ENCODE measurements at regions of chr4 and their contacts with region 1.

Region 1: GRCh38 chr4:42588909-42589308 is 68.0 kb downstream of the ATP8A1 start:
- DNase-seq: no peak
- H3K4me3 ChIP-seq: no peak overlapping the region
- H3K27ac ChIP-seq: no peak overlapping the region
- H3K4me1 ChIP-seq: no peaks in the 10 kb centered on the region
- H3K27me3 ChIP-seq: no peaks in the 10 kb centered on the region
- CTCF ChIP-seq: no peak
- EP300 ChIP-seq: no peak
- POLR2A ChIP-seq: no peak

Region 2: DNA sequence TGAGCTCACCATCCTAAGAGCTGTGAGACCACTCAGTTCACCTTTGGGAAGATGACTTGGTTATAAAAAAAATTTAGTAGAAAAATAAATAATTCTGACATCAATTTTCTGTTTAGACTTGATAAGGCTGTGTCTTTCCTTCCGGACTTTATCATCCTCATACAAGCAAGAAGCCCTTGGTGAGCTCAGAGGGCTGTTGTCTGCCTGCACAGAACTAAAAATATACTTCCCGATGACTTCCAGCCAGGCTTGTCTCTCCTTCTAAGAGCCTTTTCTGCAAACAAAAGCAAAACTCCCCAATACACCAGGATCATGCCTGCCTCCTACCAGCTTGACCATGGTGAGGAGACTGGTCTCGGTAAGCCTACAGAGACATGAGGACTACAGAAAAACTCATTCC is 782.1 kb before region 1 on chr4:
- intact Hi-C with region 1: no loop called
- DNase-seq: no peak
- H3K4me3 ChIP-seq: no peak overlapping the region
- H3K27ac ChIP-seq: no peak overlapping the region
- H3K4me1 ChIP-seq: no peaks in the 10 kb centered on the region
- H3K27me3 ChIP-seq: no peaks in the 10 kb centered on the region
- CTCF ChIP-seq: no peak
- EP300 ChIP-seq: no peak
- POLR2A ChIP-seq: no peak

Region 3: DNA sequence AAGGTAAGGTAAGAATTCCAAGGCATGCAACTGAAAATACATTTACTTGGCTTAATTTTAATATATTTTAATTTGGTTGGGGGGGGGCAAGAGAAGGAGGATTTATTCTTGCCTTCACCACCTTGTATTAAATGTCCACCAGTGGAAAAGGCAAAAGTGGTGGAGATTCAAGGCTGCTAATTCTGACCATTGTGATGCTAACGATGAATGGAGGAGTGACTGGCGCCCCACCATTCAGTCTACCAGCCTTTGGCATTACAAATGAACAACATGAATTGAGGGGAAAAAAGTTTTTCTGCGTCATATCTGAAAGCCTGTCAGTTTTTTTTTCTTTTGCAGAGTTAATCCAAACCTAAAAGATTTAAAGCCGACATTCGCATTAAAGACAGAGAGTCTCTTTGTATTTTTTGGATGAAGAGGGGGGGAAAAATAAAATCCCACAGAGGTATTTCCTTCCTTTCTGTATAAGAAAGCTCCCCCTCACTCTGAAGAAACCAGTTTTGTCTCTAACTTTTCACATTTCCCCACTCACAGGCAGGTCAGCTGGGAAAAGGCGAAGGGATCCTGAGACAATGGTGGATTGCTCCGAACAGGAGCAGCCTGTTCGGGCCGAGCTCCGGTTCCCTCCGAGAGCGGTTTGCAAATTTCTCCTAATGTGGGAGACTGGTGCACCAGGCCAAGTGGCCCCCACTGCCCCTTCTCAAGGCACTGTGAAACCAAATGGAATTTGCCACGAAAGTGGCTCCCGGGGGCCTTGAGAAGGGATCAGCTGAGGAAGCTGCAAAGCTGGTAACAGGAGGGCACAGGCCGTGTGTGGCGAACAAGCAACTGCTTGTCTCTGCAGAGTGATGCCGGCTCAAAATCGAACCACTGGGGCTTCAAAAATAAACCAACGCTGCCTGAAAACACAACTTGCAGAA is 163.5 kb before region 1 on chr4:
- intact Hi-C with region 1: no loop called
- DNase-seq: no peak
- H3K4me3 ChIP-seq: no peak overlapping the region
- H3K27ac ChIP-seq: no peak overlapping the region
- H3K4me1 ChIP-seq: no peaks in the 10 kb centered on the region
- H3K27me3 ChIP-seq: peaks cover 7% of the 10 kb centered on the region
- CTCF ChIP-seq: no peak
- EP300 ChIP-seq: no peak
- POLR2A ChIP-seq: no peak

Region 4: GRCh38 chr4:42656944-42657792 is 68.3 kb after region 1 on chr4 and contains the start of gene ATP8A1:
- intact Hi-C with region 1: loop called in 1 of 4 experiments (anchors 10 kb)
- DNase-seq: peak; percentile 91 to 94 (median 93)
- H3K4me3 ChIP-seq: peak within 1 kb of the TSS; percentile 64
- H3K27ac ChIP-seq: peak within 1 kb of the TSS; percentile 61 to 88
- H3K4me1 ChIP-seq: peaks cover 6% of the 10 kb centered on the region
- H3K27me3 ChIP-seq: no peaks in the 10 kb centered on the region
- CTCF ChIP-seq: peak in 2 of 3 donors; percentile 9 to 20
- EP300 ChIP-seq: no peak
- POLR2A ChIP-seq: peak; percentile 51
- total RNA-seq, gene ATP8A1: 14.0 to 73.2 (median 23.7) TPM

Measured in ovary (tissue), 10 donors.